Posterior cingulate gyrus (tissue), 11 donors: ENCODE measurements at regions of chr15 and their contacts with region 1.

Region 1: GRCh38 chr15:73633111-73633990 is at the start of gene NPTN:
- DNase-seq: peak; percentile 99 to 100 (median 99)

Region 2: GRCh38 chr15:73305331-73306211 is 327.8 kb before region 1 on chr15:
- intact Hi-C with region 1: loop called (anchors 2 kb)
- DNase-seq: peak in 5 of 10 donors; percentile 34 to 89 (median 51)

Region 3: DNA sequence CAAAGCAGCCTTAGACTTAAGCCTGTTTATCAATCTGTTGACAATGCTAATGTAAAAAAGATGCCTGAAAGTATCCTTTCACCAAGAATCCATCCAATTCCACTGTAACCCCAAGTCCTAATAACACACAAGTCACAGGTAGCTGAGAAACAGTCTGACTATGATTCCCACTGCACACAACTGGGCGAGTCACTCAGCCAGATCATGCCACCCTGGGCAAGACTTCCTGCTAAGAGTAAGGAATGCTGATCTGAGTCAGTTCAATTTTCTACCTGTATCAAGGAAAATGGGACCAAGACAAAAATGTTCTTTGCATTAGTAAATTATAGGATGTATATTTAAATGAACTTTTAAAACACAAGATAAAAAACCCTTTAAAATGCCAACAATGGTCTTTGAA is 33.4 kb before region 1 on chr15:
- intact Hi-C with region 1: loop called (anchors 5 kb)
- DNase-seq: no peak

Region 4: GRCh38 chr15:73700041-73700842 is 66.9 kb after region 1 on chr15:
- intact Hi-C with region 1: loop called (anchors 2 kb)
- DNase-seq: peak; percentile 61 to 97 (median 84)